IMR-90 (cell line): ENCODE measurements at regions of chr17 and their contacts with region 1.

Region 1: GRCh38 chr17:43170766-43171585 is at the start of gene NBR1:
- DNase-seq: peak; percentile 98
- ATAC-seq: peak; percentile 83
- H3K4me3 ChIP-seq: peak within 1 kb of the TSS; percentile 75
- H3K27ac ChIP-seq: peak within 1 kb of the TSS; percentile 98
- H3K4me1 ChIP-seq: peaks cover 2% of the 10 kb centered on the region; the same call in 1 of the 2 replicates
- H3K27me3 ChIP-seq: no peaks in the 10 kb centered on the region
- CTCF ChIP-seq: 0 out of 2 replicates have a peak, but pooled peaks have one; percentile 24
- POLR2A ChIP-seq: peak; percentile 91
- RAD21 ChIP-seq: no peak
- total RNA-seq, gene NBR1: 105 and 132 TPM in 2 replicates

Region 2: GRCh38 chr17:43125133-43125966 is 45.6 kb before region 1 on chr17 and contains the start of gene BRCA1:
- CTCF ChIA-PET with region 1: no interaction called
- POLR2A ChIA-PET with region 1: no interaction called
- dilution Hi-C with region 1: no loop called
- in situ Hi-C with region 1: no loop called
- intact Hi-C with region 1: loop called (anchors 5 kb)
- DNase-seq: peak; percentile 99
- ATAC-seq: peak; percentile 99
- H3K4me3 ChIP-seq: peak within 1 kb of the TSS; percentile 73
- H3K27ac ChIP-seq: peak within 1 kb of the TSS; percentile 38
- H3K4me1 ChIP-seq: peaks cover 6% of the 10 kb centered on the region; the same call in 1 of the 2 replicates
- H3K27me3 ChIP-seq: no peaks in the 10 kb centered on the region
- CTCF ChIP-seq: no peak
- POLR2A ChIP-seq: peak; percentile 73
- RAD21 ChIP-seq: no peak
- total RNA-seq, gene BRCA1: 17.7 and 20.0 TPM in 2 replicates